ENCODE measurements at regions of chr3 and their contacts with region 1.

Region 1: GRCh38 chr3:132464066-132464465 is 46.8 kb downstream of the DNAJC13 start:
- DNase-seq: no peak
- ATAC-seq: no peak
- H3K4me3 ChIP-seq: no peak overlapping the region
- H3K4me3 Mint-ChIP-seq: no peak overlapping the region
- H3K27ac ChIP-seq: no peak overlapping the region
- H3K27ac Mint-ChIP-seq: no peak overlapping the region
- H3K4me1 ChIP-seq: no peaks in the 10 kb centered on the region
- H3K4me1 Mint-ChIP-seq: no peaks in the 10 kb centered on the region
- H3K27me3 ChIP-seq: no peaks in the 10 kb centered on the region
- H3K27me3 Mint-ChIP-seq: no peaks in the 10 kb centered on the region
- CTCF ChIP-seq: no peak

Region 2: DNA sequence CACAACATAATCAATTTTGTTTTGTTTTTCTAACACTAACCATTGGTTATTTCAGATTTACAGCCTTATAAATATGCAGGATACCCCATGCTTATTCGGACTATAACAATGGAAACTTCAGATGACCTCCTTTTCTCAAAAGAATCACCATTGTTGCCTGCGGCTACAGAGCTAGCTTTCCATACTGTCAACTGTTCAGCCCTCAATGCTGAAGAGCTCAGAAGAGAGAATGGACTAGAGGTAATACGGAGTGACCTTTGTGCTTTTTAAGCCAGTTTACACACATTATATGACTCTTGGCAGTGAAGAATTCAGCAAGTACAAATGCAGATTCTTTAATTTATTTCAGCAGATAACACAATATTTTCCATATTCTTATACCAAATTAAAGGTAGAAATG is 35.0 kb after region 1 on chr3:
- CTCF ChIA-PET with region 1: no interaction called
- POLR2A ChIA-PET with region 1: no interaction called
- intact Hi-C with region 1: loop called in 1 of 2 experiments (anchors 5 kb)
- DNase-seq: no peak
- ATAC-seq: no peak
- H3K4me3 ChIP-seq: no peak overlapping the region
- H3K4me3 Mint-ChIP-seq: no peak overlapping the region
- H3K27ac ChIP-seq: no peak overlapping the region
- H3K27ac Mint-ChIP-seq: no peak overlapping the region
- H3K4me1 ChIP-seq: no peaks in the 10 kb centered on the region
- H3K4me1 Mint-ChIP-seq: no peaks in the 10 kb centered on the region
- H3K27me3 ChIP-seq: no peaks in the 10 kb centered on the region
- H3K27me3 Mint-ChIP-seq: no peaks in the 10 kb centered on the region
- CTCF ChIP-seq: no peak

Region 3: DNA sequence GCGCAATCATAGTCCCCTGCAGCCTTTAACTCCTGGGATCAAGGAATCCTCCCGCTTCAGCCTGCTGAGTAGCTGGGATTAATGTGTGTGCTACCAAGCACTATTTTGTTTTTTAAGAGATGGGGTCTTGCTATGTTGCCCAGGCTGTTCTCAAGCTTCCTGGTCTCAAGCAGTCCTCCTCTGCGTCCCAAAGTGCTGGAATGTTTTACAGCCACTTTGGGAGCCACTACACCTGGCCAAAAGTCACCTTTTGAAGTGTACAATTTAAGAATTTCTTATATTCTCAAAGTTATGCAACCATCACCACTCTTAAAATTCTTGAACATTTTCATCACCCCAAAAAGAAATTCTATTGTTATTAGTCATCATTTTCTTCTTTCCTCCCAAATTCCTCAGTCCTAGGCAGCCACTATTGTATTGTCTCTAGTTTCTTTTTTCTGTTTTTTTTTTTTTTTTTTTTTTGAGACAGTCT is 1127.2 kb after region 1 on chr3:
- CTCF ChIA-PET with region 1: no interaction called
- POLR2A ChIA-PET with region 1: no interaction called
- intact Hi-C with region 1: no loop called
- DNase-seq: no peak
- ATAC-seq: no peak
- H3K4me3 ChIP-seq: no peak overlapping the region
- H3K4me3 Mint-ChIP-seq: no peak overlapping the region
- H3K27ac ChIP-seq: no peak overlapping the region
- H3K27ac Mint-ChIP-seq: peak overlapping the region; percentile 59
- H3K4me1 ChIP-seq: no peaks in the 10 kb centered on the region
- H3K4me1 Mint-ChIP-seq: peaks cover 12% of the 10 kb centered on the region
- H3K27me3 ChIP-seq: no peaks in the 10 kb centered on the region
- H3K27me3 Mint-ChIP-seq: no peaks in the 10 kb centered on the region
- CTCF ChIP-seq: no peak

Measured in CD4-positive, alpha-beta T cell (primary cell).